ENCODE measurements at regions of chr17 and their contacts with region 1.

Region 1: GRCh38 chr17:17681187-17681848 is at the start of gene RAI1:
- DNase-seq: peak; percentile 80 to 84 (median 81)
- ATAC-seq: peak; percentile 73
- H3K4me3 ChIP-seq: peak within 1 kb of the TSS; percentile 70
- H3K27ac ChIP-seq: peak within 1 kb of the TSS; percentile 89
- H3K4me1 ChIP-seq: peaks cover 22 to 40% of the 10 kb centered on the region in 2 experiments
- H3K27me3 ChIP-seq: no peaks in the 10 kb centered on the region
- CTCF ChIP-seq: peak; percentile 46 to 72 (median 61); a peak in 5 of 6 replicates
- EP300 ChIP-seq: no peak
- POLR2A ChIP-seq: no peak
- RAD21 ChIP-seq: peak in 1 of 2 experiments; percentile 86; a peak in 3 of 4 replicates
- polyA plus RNA-seq, gene RAI1: 0.68 to 1.5 TPM

Region 2: GRCh38 chr17:17694169-17695081 is 13.1 kb after region 1 on chr17:
- CTCF ChIA-PET with region 1: no interaction called
- POLR2A ChIA-PET with region 1: interaction called, 20 read pairs
- in situ Hi-C with region 1: no loop called
- intact Hi-C with region 1: no loop called
- DNase-seq: peak; percentile 70 to 90 (median 87)
- ATAC-seq: peak; percentile 82
- H3K4me3 ChIP-seq: peak overlapping the region; percentile 58
- H3K27ac ChIP-seq: peak overlapping the region; percentile 84
- H3K4me1 ChIP-seq: peaks cover 26 to 43% of the 10 kb centered on the region in 2 experiments
- H3K27me3 ChIP-seq: no peaks in the 10 kb centered on the region
- CTCF ChIP-seq: no peak
- EP300 ChIP-seq: no peak
- POLR2A ChIP-seq: peak; percentile 14; the same call in 1 of the 2 replicates
- RAD21 ChIP-seq: no peak

Region 3: DNA sequence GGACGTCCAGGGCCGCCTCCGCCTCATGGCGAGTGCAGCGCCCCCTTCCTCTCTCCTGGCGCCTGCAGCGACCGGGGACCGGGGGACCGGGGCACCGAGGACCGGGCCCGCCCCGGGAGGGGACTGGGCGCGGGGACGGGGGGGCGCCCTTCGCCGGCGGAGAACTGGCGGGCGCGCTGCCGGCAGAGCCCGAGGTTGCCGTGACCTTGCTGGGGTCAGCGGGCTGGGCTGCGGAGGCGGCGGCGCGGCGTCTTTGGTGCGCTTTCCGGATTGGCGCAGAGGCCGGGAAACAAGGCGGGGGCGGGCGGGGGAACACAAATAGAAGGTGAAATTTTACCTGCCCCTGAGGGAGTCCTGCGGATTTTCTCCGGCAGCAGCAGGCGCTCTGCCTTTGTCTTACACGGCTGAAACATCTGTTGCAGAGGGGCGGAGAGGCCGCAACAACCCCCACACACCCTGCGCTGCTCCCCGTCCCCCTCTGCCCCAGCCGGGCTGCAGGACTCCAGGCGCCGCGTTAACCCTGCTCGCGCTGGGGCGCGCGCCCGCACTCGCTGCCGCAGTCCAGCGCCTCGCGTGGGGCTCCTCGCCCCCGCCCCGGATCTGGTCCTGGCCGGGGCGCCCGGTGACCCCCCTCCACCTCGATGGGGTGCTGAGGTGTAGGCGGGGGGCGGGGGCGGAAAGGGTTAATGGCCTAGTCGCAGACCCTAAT is 102.0 kb after region 1 on chr17:
- CTCF ChIA-PET with region 1: interaction called, 3 read pairs
- POLR2A ChIA-PET with region 1: no interaction called
- in situ Hi-C with region 1: no loop called
- intact Hi-C with region 1: loop called (anchors 10 kb)
- DNase-seq: peak; percentile 51 to 75 (median 70)
- ATAC-seq: peak; percentile 76
- H3K4me3 ChIP-seq: peak overlapping the region; percentile 30
- H3K27ac ChIP-seq: peak overlapping the region; percentile 63; the same call in 2 of the 3 replicates
- H3K4me1 ChIP-seq: peaks cover 9 to 87% of the 10 kb centered on the region in 2 experiments
- H3K27me3 ChIP-seq: no peaks in the 10 kb centered on the region
- CTCF ChIP-seq: 0 out of 6 replicates have a peak, but pooled peaks of 1 of the 3 experiments have one; percentile 9
- EP300 ChIP-seq: no peak
- POLR2A ChIP-seq: no peak
- RAD21 ChIP-seq: no peak

Region 4: GRCh38 chr17:17823433-17824118 is 142.3 kb after region 1 on chr17:
- CTCF ChIA-PET with region 1: no interaction called
- POLR2A ChIA-PET with region 1: no interaction called
- in situ Hi-C with region 1: no loop called
- intact Hi-C with region 1: loop called (anchors 10 kb)
- DNase-seq: peak; percentile 89 to 98 (median 94)
- ATAC-seq: peak; percentile 86
- H3K4me3 ChIP-seq: peak overlapping the region; percentile 52
- H3K27ac ChIP-seq: peak overlapping the region; percentile 99
- H3K4me1 ChIP-seq: peaks cover 82 to 88% of the 10 kb centered on the region in 2 experiments
- H3K27me3 ChIP-seq: no peaks in the 10 kb centered on the region
- CTCF ChIP-seq: no peak
- EP300 ChIP-seq: no peak; the same call in none of the 2 replicates
- POLR2A ChIP-seq: no peak; the same call in 1 of the 2 replicates
- RAD21 ChIP-seq: no peak

Region 5: GRCh38 chr17:17844500-17844899 is 163.2 kb after region 1 on chr17:
- CTCF ChIA-PET with region 1: no interaction called
- POLR2A ChIA-PET with region 1: no interaction called
- in situ Hi-C with region 1: no loop called
- intact Hi-C with region 1: no loop called
- DNase-seq: no peak
- ATAC-seq: no peak
- H3K4me3 ChIP-seq: no peak overlapping the region
- H3K27ac ChIP-seq: no peak overlapping the region
- H3K4me1 ChIP-seq: peaks cover 33 to 86% of the 10 kb centered on the region in 2 experiments
- H3K27me3 ChIP-seq: no peaks in the 10 kb centered on the region
- CTCF ChIP-seq: no peak
- EP300 ChIP-seq: no peak
- POLR2A ChIP-seq: no peak
- RAD21 ChIP-seq: no peak

Region 6: GRCh38 chr17:17859909-17860765 is 178.8 kb after region 1 on chr17:
- CTCF ChIA-PET with region 1: interaction called, 3 read pairs
- POLR2A ChIA-PET with region 1: no interaction called
- in situ Hi-C with region 1: loop called (anchors 5 kb)
- intact Hi-C with region 1: loop called (anchors 2 kb)
- DNase-seq: peak; percentile 65 to 77 (median 75)
- ATAC-seq: peak; percentile 96
- H3K4me3 ChIP-seq: no peak overlapping the region
- H3K27ac ChIP-seq: no peak overlapping the region
- H3K4me1 ChIP-seq: peaks cover 0 to 5% of the 10 kb centered on the region in 2 experiments; a peak in 2 of 5 replicates
- H3K27me3 ChIP-seq: no peaks in the 10 kb centered on the region
- CTCF ChIP-seq: peak; percentile 83 to 87 (median 85)
- EP300 ChIP-seq: no peak
- POLR2A ChIP-seq: no peak
- RAD21 ChIP-seq: peak; percentile 90 to 96

Region 7: DNA sequence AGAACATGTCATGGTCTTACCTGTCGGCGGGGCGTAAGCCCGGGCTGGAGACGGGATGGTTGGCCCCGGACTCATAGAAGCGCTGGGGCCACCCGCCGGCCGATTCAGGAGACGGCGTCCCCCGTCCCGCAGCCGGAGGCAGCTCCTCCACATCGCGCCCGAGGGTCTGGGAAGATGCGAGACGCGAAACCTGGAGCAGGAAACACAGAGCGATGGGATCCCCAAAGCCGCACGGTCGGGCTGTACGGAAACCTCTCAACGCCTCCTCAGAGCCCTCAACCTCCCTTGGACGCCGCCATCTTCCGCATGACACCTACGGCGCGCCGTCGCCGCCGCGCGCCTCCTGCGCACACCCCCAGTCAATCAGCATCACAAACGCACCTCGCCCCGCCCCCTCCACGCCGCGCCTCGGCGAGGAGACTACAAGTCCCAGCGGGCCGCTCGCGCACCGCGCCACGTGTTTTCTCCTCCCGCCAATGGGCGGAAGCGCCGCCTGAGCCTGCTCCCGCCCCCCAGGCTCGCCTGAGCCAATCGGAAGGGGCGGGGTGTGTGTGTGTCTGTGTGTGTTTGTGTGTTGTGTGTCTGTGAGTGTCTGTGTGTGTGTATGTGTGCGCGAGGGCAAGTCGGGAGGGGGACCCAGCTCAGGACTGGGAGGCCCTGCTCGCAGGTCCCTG is 357.7 kb after region 1 on chr17 and contains the starts of genes ATPAF2 and GID4:
- CTCF ChIA-PET with region 1: no interaction called
- POLR2A ChIA-PET with region 1: no interaction called
- in situ Hi-C with region 1: no loop called
- intact Hi-C with region 1: loop called (anchors 5 kb)
- DNase-seq: peak; percentile 93 to 99 (median 94)
- ATAC-seq: peak; percentile 94
- H3K4me3 ChIP-seq: peak within 1 kb of the TSS; percentile 72
- H3K27ac ChIP-seq: peak within 1 kb of the TSS; percentile 67
- H3K4me1 ChIP-seq: peaks cover 24 to 38% of the 10 kb centered on the region in 2 experiments; a peak in 4 of 5 replicates
- H3K27me3 ChIP-seq: no peaks in the 10 kb centered on the region
- CTCF ChIP-seq: 0 out of 6 replicates have a peak, but pooled peaks of 1 of the 3 experiments have one; percentile 3
- EP300 ChIP-seq: no peak
- POLR2A ChIP-seq: peak; percentile 60
- RAD21 ChIP-seq: no peak
- polyA plus RNA-seq, gene ATPAF2: 2.1 to 6.4 TPM
- polyA plus RNA-seq, gene GID4: 1.2 to 1.3 TPM

Measured in K562 (cell line).